A673 (cell line): ENCODE measurements at regions of chr6 and their contacts with region 1.

Region 1: GRCh38 chr6:26003102-26003694 is 40.6 kb downstream of the TRIM38 start:
- DNase-seq: peak; percentile 73
- H3K4me3 ChIP-seq: no peak overlapping the region
- H3K27ac ChIP-seq: no peak overlapping the region
- H3K4me1 ChIP-seq: peaks cover 1% of the 10 kb centered on the region
- H3K27me3 ChIP-seq: no peaks in the 10 kb centered on the region
- CTCF ChIP-seq: peak; percentile 81

Region 2: GRCh38 chr6:25717866-25718740 is 285.1 kb before region 1 on chr6:
- CTCF ChIA-PET with region 1: no interaction called
- POLR2A ChIA-PET with region 1: no interaction called
- intact Hi-C with region 1: loop called (anchors 5 kb)
- DNase-seq: peak; percentile 60
- H3K4me3 ChIP-seq: no peak overlapping the region
- H3K27ac ChIP-seq: no peak overlapping the region
- H3K4me1 ChIP-seq: peaks cover 17% of the 10 kb centered on the region
- H3K27me3 ChIP-seq: no peaks in the 10 kb centered on the region
- CTCF ChIP-seq: peak; percentile 70

Region 3: GRCh38 chr6:25788305-25788922 is 214.8 kb before region 1 on chr6:
- CTCF ChIA-PET with region 1: no interaction called
- POLR2A ChIA-PET with region 1: no interaction called
- intact Hi-C with region 1: loop called (anchors 2 kb)
- DNase-seq: peak; percentile 72
- H3K4me3 ChIP-seq: no peak overlapping the region
- H3K27ac ChIP-seq: no peak overlapping the region
- H3K4me1 ChIP-seq: no peaks in the 10 kb centered on the region
- H3K27me3 ChIP-seq: no peaks in the 10 kb centered on the region
- CTCF ChIP-seq: peak; percentile 71

Region 4: DNA sequence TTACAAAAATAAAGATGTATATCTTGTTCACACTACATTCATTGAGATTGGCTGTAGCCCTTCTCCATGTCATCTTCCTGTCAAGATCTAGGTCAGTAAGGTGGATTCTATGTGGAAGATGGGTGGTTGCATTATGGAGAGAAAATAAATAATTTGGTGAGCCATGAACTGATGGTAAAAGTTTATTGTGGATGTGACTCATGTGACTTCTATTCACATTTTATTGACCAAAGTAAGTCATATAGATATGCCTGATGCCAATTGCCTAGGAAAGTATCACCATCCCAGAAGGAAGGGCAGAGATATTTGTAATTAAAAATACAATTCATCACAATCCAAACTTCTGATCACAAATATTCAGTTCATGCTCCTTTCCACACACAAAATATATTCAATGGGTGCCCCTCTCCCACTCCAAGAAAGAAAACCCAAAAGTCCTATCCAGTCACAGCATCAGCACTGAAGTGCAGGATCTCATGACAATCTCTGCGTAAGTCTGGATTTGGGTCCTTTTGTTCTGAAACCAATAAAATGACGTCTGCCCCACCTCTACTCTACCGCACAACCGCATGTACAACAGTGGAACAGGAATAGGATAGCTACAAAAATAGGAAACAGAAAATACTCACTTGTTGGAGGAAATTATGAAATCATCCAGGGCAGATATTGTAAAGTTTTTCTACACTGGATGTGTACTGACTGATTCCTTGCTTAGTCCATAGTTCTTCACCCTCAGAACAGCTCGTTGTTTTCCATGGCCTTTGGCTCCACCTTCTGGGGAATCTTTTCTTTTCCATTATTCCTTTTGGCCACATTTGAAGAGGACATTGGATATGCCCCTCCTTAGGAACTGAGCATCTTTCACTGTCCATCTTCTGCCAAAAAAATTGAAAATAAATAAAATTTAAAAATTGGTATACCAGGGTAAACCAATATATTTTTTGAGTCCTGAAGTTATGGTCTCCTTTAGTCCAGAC is 113.0 kb before region 1 on chr6:
- CTCF ChIA-PET with region 1: no interaction called
- POLR2A ChIA-PET with region 1: no interaction called
- intact Hi-C with region 1: loop called (anchors 5 kb)
- DNase-seq: peak; percentile 66
- H3K4me3 ChIP-seq: no peak overlapping the region
- H3K27ac ChIP-seq: no peak overlapping the region
- H3K4me1 ChIP-seq: no peaks in the 10 kb centered on the region
- H3K27me3 ChIP-seq: no peaks in the 10 kb centered on the region
- CTCF ChIP-seq: peak; percentile 58